ENCODE measurements at regions of chr6 and their contacts with region 1.

Region 1: GRCh38 chr6:3281631-3282475 is 23.1 kb downstream of the PSMG4 start:
- DNase-seq: no peak
- H3K4me3 ChIP-seq: no peak overlapping the region
- H3K27ac ChIP-seq: peak overlapping the region; percentile 1 to 65
- H3K4me1 ChIP-seq: no peaks in the 10 kb centered on the region
- H3K27me3 ChIP-seq: no peaks in the 10 kb centered on the region
- CTCF ChIP-seq: no peak
- POLR2A ChIP-seq: no peak

Region 2: DNA sequence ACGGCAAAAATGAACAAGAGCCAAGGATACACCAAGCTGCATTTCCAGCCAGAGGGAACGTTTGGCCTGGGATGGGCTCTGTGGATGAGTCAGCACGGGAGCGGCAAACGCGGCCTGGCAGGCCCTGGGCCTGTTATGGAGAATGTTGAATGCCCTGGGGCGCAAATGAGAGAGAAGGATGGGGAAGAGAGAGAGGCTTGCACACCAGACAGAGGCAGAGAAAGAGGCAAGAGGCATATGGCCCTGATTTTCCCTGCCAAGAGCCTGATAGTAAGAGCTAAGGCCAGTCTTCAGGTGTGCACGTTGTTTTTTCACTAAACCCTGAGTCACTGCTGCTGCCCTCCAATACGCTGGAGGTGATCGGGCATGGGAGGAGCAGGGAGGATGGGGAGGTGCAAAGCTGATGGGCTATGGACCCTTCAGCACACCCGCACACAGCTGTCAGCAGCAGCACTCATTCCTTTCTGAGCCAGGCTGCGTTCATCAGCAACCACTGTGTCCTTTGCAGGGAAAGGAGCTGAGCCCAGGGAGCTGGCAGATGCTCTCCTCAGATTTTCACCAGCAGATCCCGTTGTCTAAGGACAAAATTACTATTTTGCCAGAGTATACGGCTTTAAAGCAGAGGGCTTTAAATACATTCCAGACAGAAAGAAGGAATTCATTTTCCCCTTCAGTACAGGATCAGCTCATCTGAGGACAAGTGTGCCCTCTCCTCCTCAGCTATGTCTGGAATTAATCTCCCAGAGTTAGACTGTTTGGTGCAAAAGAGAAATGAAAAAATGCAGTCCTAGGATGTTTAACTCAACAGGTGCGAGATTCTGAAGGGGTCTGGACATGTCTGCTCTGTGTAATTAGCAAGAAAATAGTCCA is 236.7 kb after region 1 on chr6:
- intact Hi-C with region 1: loop called (anchors 10 kb)
- DNase-seq: peak; percentile 76 to 78
- H3K4me3 ChIP-seq: no peak overlapping the region
- H3K27ac ChIP-seq: peak overlapping the region; percentile 82 to 83
- H3K4me1 ChIP-seq: peaks cover 6 to 8% of the 10 kb centered on the region in 2 donors
- H3K27me3 ChIP-seq: no peaks in the 10 kb centered on the region
- CTCF ChIP-seq: no peak
- POLR2A ChIP-seq: no peak

Region 3: GRCh38 chr6:3732345-3733141 is 450.7 kb after region 1 on chr6:
- intact Hi-C with region 1: loop called (anchors 5 kb)
- DNase-seq: peak; percentile 68 to 87
- H3K4me3 ChIP-seq: no peak overlapping the region
- H3K27ac ChIP-seq: peak overlapping the region in 1 of 2 donors; percentile 28
- H3K4me1 ChIP-seq: peaks cover 0 to 9% of the 10 kb centered on the region in 2 donors
- H3K27me3 ChIP-seq: no peaks in the 10 kb centered on the region
- CTCF ChIP-seq: peak; percentile 72 to 88 (median 86)
- POLR2A ChIP-seq: no peak

Region 4: GRCh38 chr6:5103250-5103649 is 1821.4 kb after region 1 on chr6:
- intact Hi-C with region 1: no loop called
- DNase-seq: no peak
- H3K4me3 ChIP-seq: no peak overlapping the region
- H3K27ac ChIP-seq: no peak overlapping the region
- H3K4me1 ChIP-seq: no peaks in the 10 kb centered on the region
- H3K27me3 ChIP-seq: no peaks in the 10 kb centered on the region
- CTCF ChIP-seq: no peak
- POLR2A ChIP-seq: no peak

Measured in breast epithelium (tissue), 4 donors.